Posterior vena cava (tissue), 2 donors: ENCODE measurements at regions of chr9 and their contacts with region 1.

Region 1: DNA sequence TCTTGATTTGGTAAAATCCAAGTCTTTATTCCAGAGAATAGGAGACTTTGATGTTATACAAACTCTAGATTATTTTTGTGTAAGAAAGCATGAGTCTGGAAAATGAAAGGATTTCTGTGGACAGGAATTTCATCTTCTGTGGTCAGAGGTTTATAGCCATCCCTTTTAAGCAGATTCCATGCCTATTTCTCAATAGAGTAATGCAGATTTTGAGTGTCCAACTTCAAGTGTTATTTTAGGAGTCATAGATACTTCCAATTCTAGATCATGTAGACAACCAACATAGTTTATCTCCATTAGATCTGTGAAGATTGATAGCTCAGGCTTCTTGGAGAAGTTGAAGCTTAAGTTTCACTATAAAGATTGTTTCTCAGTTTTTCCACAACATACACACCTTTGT is 379.7 kb downstream of the PSAT1 start:
- DNase-seq: no peak

Region 2: DNA sequence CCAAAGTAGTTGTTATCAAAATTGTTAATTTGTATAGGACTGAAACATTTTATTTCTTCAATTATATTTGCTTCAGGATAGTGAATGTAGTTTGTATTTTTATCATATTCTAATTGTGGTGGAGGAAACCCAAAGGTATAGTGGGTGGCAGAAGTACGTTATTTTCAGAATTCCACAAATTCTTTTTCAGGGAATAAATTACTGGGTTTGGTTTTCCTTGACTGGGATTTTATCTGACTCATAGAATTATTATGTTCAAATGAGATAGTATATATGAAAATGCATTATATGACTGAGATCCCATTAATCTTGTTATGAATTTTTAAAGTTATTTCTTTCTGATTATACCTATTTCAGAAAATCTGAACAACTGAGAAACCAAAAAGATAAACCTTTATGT is 1425.6 kb before region 1 on chr9:
- intact Hi-C with region 1: loop called in 1 of 2 experiments (anchors 10 kb)
- DNase-seq: no peak

Region 3: GRCh38 chr9:78325343-78325742 is 351.3 kb before region 1 on chr9:
- intact Hi-C with region 1: no loop called
- DNase-seq: no peak